Tibial artery (tissue), 4 donors: ENCODE measurements at regions of chr22 and their contacts with region 1.

Region 1: GRCh38 chr22:41543854-41544670 is at the start of gene POLR3H:
- DNase-seq: peak; percentile 99
- H3K4me3 ChIP-seq: peak within 1 kb of the TSS; percentile 81 to 95
- H3K27ac ChIP-seq: peak within 1 kb of the TSS; percentile 90 to 95
- H3K4me1 ChIP-seq: peaks cover 0 to 35% (median 20%) of the 10 kb centered on the region in 4 donors
- H3K27me3 ChIP-seq: no peaks in the 10 kb centered on the region
- CTCF ChIP-seq: peak; percentile 53 to 64

Region 2: GRCh38 chr22:41504397-41504796 is 39.7 kb before region 1 on chr22:
- intact Hi-C with region 1: no loop called
- DNase-seq: peak; percentile 69 to 93
- H3K4me3 ChIP-seq: no peak overlapping the region
- H3K27ac ChIP-seq: peak overlapping the region; percentile 68 to 69
- H3K4me1 ChIP-seq: peaks cover 0 to 46% (median 30%) of the 10 kb centered on the region in 4 donors
- H3K27me3 ChIP-seq: no peaks in the 10 kb centered on the region
- CTCF ChIP-seq: no peak

Region 3: DNA sequence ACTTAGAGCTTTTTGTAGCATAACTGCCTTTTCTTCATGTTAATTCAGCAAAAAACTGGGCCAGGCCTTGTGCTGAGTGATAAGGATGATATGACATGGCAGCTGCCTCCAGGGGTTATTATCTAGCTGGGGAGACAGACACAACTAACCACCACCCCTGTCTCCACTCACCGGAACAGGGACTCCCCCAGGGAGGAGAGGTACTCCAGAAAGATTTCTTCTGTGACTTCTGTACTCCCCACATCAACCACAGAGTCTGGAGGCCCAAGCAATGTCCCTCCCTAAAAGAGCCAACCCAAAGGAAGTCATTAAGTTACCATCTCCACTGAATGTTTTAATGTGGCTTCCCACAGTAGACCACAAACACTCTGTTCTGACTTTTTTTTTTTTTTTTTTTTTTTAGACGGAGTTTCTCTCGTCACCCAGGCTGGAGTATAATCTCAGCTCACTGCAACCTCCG is 59.8 kb after region 1 on chr22:
- intact Hi-C with region 1: no loop called
- DNase-seq: no peak
- H3K4me3 ChIP-seq: no peak overlapping the region
- H3K27ac ChIP-seq: no peak overlapping the region
- H3K4me1 ChIP-seq: no peaks in the 10 kb centered on the region
- H3K27me3 ChIP-seq: no peaks in the 10 kb centered on the region
- CTCF ChIP-seq: no peak

Region 4: DNA sequence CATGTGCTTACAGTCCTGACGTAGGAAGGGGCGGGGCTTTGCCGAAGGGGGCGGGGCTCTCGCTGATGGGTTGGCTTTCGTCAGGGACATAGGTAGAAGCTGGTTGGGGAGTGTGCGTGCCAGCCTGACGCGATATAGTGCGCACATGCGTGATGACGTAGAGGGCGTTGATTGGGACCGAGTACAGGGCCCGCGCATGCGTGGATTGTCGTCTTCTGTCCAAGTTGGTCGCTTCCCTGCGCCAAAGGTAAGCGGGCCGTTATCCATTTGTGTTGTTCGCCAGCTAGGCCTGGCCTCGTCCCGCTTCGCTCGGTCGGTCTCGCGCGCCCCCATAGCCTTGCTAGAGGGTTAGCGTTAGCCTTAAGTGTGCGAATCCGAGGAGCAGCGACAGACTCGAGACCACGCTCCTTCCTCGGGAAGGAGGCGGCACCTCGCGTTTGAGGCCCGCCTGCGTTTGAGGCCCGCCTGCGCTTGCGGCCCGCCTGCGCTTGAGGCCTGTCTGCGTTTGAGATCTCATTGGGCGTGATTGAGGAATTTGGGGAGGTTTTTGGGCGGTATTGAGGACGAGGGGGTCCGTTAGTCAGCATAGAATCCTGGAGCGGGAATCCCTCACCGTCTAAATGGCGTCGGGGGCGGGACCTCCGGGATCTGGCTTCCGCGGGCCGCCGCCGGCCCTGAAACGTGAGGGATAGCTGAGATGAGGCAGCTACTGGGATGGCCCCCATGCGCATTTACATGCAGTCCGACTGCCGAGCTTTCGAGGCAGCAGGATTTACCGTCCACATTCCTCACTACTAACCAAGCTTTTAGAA is 77.2 kb after region 1 on chr22 and contains the start of gene XRCC6:
- intact Hi-C with region 1: loop called (anchors 5 kb)
- DNase-seq: peak; percentile 100
- H3K4me3 ChIP-seq: peak within 1 kb of the TSS; percentile 92 to 96
- H3K27ac ChIP-seq: peak within 1 kb of the TSS; percentile 97 to 98
- H3K4me1 ChIP-seq: peaks cover 0 to 32% (median 23%) of the 10 kb centered on the region in 4 donors
- H3K27me3 ChIP-seq: no peaks in the 10 kb centered on the region
- CTCF ChIP-seq: no peak